ENCODE measurements at regions of chr7 and their contacts with region 1.

Region 1: DNA sequence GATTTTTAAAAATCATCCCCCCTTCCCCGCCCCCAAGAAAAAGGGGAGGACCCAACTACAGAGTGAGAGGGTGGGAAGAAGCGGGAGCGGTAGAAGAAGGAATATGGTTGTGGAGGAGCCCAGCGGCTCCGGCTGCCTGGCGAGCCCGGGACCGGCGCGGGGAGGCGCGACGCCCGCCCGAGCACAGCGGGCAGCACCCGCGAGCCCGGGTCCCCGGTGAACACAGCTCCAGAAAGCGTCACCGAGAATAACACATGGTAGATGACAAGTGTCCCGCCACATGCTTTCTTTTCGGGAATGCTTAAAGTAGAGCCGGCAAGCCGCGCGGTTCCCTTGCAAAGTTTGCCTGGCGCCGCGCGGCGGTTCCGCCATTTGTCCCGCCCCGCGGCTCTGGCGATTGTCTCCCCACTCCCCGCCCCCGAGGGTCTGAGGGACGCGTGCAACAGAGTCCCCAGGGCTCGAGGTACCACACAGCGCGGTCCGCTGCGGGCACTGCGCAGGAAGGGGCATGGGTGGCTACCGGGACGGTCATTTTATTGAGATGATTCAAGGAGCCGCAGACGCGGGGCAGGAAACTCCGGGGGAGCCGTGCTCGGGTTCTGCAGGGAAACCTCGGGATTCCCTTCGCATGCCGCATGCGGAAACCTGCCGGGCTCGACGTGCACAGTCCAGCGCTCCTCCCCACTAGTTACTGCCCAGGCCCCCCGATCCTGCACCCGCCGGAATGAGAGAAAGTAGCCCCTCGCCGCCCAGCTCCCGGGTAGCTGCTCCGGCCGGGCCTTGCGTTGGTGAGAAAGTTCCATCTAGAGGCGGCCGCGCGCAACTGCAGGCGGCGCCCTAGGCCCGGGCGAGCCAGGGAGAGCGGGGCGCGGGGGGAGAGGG is 781 bp upstream of the GRM8 start:
- DNase-seq: peak; percentile 74
- H3K4me3 ChIP-seq: peak overlapping the region; percentile 65
- H3K27ac ChIP-seq: no peak overlapping the region
- H3K4me1 ChIP-seq: peaks cover 18% of the 10 kb centered on the region
- H3K27me3 ChIP-seq: peaks cover 45% of the 10 kb centered on the region
- CTCF ChIP-seq: peak; percentile 91

Region 2: DNA sequence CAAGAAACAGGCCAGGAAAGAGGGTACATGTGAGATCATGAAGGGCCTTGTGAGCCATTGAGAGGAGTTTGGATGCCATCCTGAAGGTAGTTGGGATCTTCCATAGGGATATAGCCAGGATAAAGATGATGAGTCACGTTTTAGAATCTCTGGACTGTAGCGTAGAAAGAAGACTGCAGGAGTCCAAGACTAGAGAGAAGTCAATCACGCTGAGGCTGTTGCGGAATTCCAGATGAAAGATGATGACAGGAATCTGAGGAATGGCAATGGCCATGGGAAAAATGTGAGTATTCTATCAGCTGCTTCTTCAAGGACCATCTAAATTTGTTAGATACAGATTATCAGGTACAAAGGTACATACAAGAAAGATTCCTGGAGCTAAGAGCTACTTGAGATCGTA is 712.1 kb before region 1 on chr7:
- CTCF ChIA-PET with region 1: no interaction called
- POLR2A ChIA-PET with region 1: no interaction called
- intact Hi-C with region 1: no loop called
- DNase-seq: no peak
- H3K4me3 ChIP-seq: no peak overlapping the region
- H3K27ac ChIP-seq: no peak overlapping the region
- H3K4me1 ChIP-seq: no peaks in the 10 kb centered on the region
- H3K27me3 ChIP-seq: no peaks in the 10 kb centered on the region
- CTCF ChIP-seq: no peak

Region 3: GRCh38 chr7:126803060-126803665 is 450.4 kb before region 1 on chr7:
- CTCF ChIA-PET with region 1: interaction called, 4 read pairs
- POLR2A ChIA-PET with region 1: no interaction called
- intact Hi-C with region 1: loop called (anchors 5 kb)
- DNase-seq: peak; percentile 76
- H3K4me3 ChIP-seq: no peak overlapping the region
- H3K27ac ChIP-seq: no peak overlapping the region
- H3K4me1 ChIP-seq: no peaks in the 10 kb centered on the region
- H3K27me3 ChIP-seq: no peaks in the 10 kb centered on the region
- CTCF ChIP-seq: peak; percentile 79

Region 4: GRCh38 chr7:126856691-126857291 is 396.7 kb before region 1 on chr7:
- CTCF ChIA-PET with region 1: no interaction called
- POLR2A ChIA-PET with region 1: no interaction called
- intact Hi-C with region 1: loop called (anchors 10 kb)
- DNase-seq: peak; percentile 32
- H3K4me3 ChIP-seq: no peak overlapping the region
- H3K27ac ChIP-seq: no peak overlapping the region
- H3K4me1 ChIP-seq: no peaks in the 10 kb centered on the region
- H3K27me3 ChIP-seq: no peaks in the 10 kb centered on the region
- CTCF ChIP-seq: peak; percentile 81

Region 5: DNA sequence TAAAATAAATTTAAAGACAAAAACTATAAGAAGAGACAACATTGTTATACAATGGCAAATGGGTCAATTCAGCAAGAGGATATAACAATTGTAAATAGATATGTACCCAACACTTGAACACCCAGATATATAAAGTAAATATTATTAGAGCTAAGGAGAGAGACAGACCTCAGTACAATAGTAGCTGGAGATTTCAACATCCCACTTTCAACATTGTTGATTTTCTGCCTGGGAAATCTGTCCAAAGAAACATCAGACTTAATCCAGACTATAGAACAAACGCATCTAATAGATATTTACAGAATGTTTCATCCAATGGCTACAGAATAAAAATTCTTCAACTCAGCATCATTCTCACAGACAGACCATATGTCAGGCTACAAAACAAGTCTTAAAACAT is 256.9 kb before region 1 on chr7:
- CTCF ChIA-PET with region 1: no interaction called
- POLR2A ChIA-PET with region 1: no interaction called
- intact Hi-C with region 1: no loop called
- DNase-seq: no peak
- H3K4me3 ChIP-seq: no peak overlapping the region
- H3K27ac ChIP-seq: no peak overlapping the region
- H3K4me1 ChIP-seq: no peaks in the 10 kb centered on the region
- H3K27me3 ChIP-seq: no peaks in the 10 kb centered on the region
- CTCF ChIP-seq: no peak

Region 6: GRCh38 chr7:127107601-127108007 is 145.9 kb before region 1 on chr7:
- CTCF ChIA-PET with region 1: no interaction called
- POLR2A ChIA-PET with region 1: no interaction called
- intact Hi-C with region 1: loop called (anchors 1 kb)
- DNase-seq: peak; percentile 72
- H3K4me3 ChIP-seq: no peak overlapping the region
- H3K27ac ChIP-seq: no peak overlapping the region
- H3K4me1 ChIP-seq: no peaks in the 10 kb centered on the region
- H3K27me3 ChIP-seq: no peaks in the 10 kb centered on the region
- CTCF ChIP-seq: peak; percentile 73

Region 7: GRCh38 chr7:127177156-127177555 is 76.4 kb before region 1 on chr7:
- CTCF ChIA-PET with region 1: no interaction called
- POLR2A ChIA-PET with region 1: no interaction called
- intact Hi-C with region 1: no loop called
- DNase-seq: no peak
- H3K4me3 ChIP-seq: no peak overlapping the region
- H3K27ac ChIP-seq: no peak overlapping the region
- H3K4me1 ChIP-seq: no peaks in the 10 kb centered on the region
- H3K27me3 ChIP-seq: no peaks in the 10 kb centered on the region
- CTCF ChIP-seq: no peak

Measured in A673 (cell line).